ENCODE measurements at regions of chr22 and their contacts with region 1.

Region 1: GRCh38 chr22:27900153-27900552 is 18.9 kb downstream of the PITPNB start:
- DNase-seq: no peak
- ATAC-seq: no peak
- H3K4me3 Mint-ChIP-seq: no peak overlapping the region
- H3K27ac Mint-ChIP-seq: no peak overlapping the region
- H3K4me1 Mint-ChIP-seq: peaks cover 12% of the 10 kb centered on the region; the same call in 1 of the 2 replicates
- H3K27me3 Mint-ChIP-seq: no peaks in the 10 kb centered on the region
- CTCF ChIP-seq: no peak

Region 2: GRCh38 chr22:27885977-27886842 is 13.9 kb before region 1 on chr22:
- CTCF ChIA-PET with region 1: interaction called, 13 read pairs
- POLR2A ChIA-PET with region 1: no interaction called
- DNase-seq: peak; percentile 46
- ATAC-seq: no peak
- H3K4me3 Mint-ChIP-seq: no peak overlapping the region
- H3K27ac Mint-ChIP-seq: peak overlapping the region; percentile 54
- H3K4me1 Mint-ChIP-seq: peaks cover 55% of the 10 kb centered on the region
- H3K27me3 Mint-ChIP-seq: no peaks in the 10 kb centered on the region
- CTCF ChIP-seq: peak; percentile 82

Region 3: DNA sequence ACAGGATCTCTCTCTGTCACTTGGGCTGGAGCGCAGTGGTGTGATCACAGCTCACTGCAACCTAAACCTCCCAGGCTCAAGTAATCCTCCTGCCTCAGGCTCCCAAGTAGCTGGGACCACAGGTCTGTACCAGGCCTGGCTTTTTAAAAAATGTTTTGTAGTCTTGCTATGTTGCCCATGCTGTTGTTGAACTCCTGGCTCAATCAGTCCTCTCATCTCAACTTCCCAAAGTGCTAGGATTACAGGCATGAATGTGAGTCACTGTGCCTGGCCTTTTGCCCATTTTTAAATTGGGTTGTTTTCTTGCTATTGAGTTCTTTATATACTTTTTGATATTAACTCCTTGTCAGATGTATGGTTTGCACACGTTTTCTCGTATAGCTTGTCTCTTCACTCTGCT is 51.9 kb after region 1 on chr22:
- CTCF ChIA-PET with region 1: no interaction called
- POLR2A ChIA-PET with region 1: no interaction called
- DNase-seq: no peak
- ATAC-seq: no peak
- H3K4me3 Mint-ChIP-seq: no peak overlapping the region
- H3K27ac Mint-ChIP-seq: no peak overlapping the region
- H3K4me1 Mint-ChIP-seq: no peaks in the 10 kb centered on the region
- H3K27me3 Mint-ChIP-seq: no peaks in the 10 kb centered on the region
- CTCF ChIP-seq: no peak